IMR-90 (cell line): ENCODE measurements at regions of chr18 and their contacts with region 1.

Region 1: DNA sequence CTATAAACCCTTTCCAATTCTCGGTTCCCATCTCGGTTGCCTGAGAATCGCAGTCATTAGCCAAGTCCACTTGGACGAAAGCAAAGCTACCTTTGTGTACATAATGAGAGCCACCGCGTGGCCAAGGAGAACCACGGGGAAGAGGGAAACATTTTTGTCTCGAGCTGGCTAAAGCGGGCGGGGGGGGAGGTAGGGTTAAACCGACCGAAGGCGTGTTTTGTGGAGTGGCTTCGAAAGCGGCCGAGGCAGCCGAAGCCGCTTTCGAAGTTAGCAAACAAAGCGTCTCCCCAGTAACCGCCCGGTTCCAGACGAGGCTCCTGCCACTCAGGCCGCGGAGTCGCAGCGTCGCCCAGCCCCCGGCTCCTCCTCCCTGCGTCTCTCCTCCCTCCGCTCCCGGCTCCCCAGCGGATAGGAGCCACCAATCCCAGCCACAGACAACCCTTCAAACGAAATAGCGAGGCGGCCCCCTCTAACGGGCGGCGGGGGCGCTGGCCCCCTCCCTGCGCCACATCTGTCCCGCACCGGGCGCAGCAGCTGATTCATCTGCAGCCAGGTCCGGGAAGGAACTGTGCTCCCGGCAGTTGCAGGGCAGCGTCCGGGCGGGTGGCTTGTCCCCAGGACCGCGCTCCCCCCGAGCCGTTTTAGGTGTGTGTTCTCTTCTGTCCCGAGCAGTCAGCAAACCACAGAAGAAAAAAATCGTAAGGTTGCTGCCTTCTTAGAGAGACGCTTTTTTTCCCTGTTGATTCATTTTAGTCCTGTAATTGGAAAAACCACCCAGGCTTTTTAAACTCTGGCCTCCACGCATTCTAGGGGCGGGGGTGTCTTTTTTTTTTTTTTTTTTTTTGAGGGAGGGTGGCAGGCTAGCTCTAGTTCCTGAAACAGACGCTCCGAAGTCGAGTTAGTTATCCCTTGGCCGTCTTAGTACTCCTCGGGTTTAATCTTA is 1.8 kb upstream of the TGIF1 start:
- DNase-seq: peak; percentile 96
- ATAC-seq: peak; percentile 76
- H3K4me3 ChIP-seq: peak overlapping the region; percentile 85
- H3K27ac ChIP-seq: peak overlapping the region; percentile 91
- H3K4me1 ChIP-seq: peaks cover 2% of the 10 kb centered on the region
- H3K27me3 ChIP-seq: no peaks in the 10 kb centered on the region
- CTCF ChIP-seq: peak; percentile 24; the same call in 1 of the 2 replicates
- POLR2A ChIP-seq: peak; percentile 95
- RAD21 ChIP-seq: peak; percentile 35; the same call in 1 of the 2 replicates

Region 2: DNA sequence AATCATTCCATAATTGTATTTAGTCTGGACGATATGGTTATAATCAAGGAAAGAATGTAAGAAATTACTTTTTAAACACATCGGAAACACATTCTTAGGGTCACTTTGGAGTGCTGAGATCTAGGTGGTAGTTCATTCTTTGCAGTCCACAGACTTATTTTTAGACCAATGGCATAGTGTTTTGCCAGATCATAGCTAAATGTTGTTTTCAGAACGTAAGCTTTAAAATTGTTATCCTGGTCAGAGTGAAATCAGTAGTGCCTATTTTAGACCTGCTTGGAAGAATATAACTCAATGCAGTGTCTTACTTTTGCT is 196.2 kb before region 1 on chr18:
- CTCF ChIA-PET with region 1: no interaction called
- POLR2A ChIA-PET with region 1: interaction called, 12 read pairs
- dilution Hi-C with region 1: no loop called
- in situ Hi-C with region 1: no loop called
- intact Hi-C with region 1: no loop called
- DNase-seq: peak; percentile 37
- ATAC-seq: no peak
- H3K4me3 ChIP-seq: peak overlapping the region; percentile 14; the same call in 1 of the 2 replicates
- H3K27ac ChIP-seq: peak overlapping the region; percentile 17; the same call in 1 of the 2 replicates
- H3K4me1 ChIP-seq: peaks cover 16% of the 10 kb centered on the region
- H3K27me3 ChIP-seq: no peaks in the 10 kb centered on the region
- CTCF ChIP-seq: no peak
- POLR2A ChIP-seq: no peak
- RAD21 ChIP-seq: no peak

Region 3: DNA sequence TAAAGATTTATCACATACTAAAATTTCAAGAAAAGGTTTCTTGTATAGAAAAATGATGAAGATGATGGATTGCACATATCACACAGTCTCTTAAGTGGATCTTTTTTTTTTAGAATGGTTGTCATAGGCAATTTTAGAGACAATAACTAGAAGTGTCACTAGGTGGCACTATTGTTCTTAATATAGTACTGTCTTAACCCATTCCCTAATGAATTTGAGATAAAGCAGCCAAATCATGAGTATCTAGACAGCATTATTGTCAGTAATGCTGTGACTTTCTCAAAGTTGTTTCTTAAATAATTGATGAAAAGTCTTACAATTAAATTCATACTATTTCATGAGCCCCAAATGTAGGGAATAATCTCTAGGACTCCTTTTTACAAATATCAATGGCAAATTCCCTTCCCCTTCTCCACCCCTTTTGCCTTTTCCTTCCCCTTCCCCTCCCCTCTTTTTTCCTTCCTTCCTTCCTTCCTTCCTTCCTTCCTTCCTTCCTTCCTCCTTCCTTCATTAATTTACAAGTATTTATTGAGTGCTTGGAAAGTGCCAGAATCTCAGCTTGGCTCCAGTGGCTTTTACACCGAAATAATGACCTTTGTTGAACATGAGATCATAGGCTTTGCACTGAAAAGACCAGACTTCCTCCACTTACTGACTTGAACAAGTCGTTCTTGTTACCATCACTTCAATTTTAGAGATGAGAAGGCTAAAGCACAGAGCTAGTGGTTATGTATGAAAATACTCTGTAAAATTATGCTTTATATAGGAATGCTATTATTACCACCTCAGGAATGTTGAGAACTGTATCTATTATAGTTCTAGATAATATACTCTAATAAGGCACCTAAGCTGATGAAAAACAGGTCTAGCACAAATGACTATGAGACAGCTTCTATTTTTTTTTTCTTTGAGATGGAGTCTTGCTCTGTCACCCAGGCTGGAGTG is 166.4 kb before region 1 on chr18:
- CTCF ChIA-PET with region 1: no interaction called
- POLR2A ChIA-PET with region 1: no interaction called
- dilution Hi-C with region 1: no loop called
- in situ Hi-C with region 1: loop called (anchors 5 kb)
- intact Hi-C with region 1: loop called (anchors 1 kb)
- DNase-seq: peak; percentile 86
- ATAC-seq: peak; percentile 79
- H3K4me3 ChIP-seq: no peak overlapping the region
- H3K27ac ChIP-seq: no peak overlapping the region
- H3K4me1 ChIP-seq: no peaks in the 10 kb centered on the region; the same call in 1 of the 2 replicates
- H3K27me3 ChIP-seq: no peaks in the 10 kb centered on the region
- CTCF ChIP-seq: peak; percentile 75
- POLR2A ChIP-seq: no peak
- RAD21 ChIP-seq: peak; percentile 89

Region 4: DNA sequence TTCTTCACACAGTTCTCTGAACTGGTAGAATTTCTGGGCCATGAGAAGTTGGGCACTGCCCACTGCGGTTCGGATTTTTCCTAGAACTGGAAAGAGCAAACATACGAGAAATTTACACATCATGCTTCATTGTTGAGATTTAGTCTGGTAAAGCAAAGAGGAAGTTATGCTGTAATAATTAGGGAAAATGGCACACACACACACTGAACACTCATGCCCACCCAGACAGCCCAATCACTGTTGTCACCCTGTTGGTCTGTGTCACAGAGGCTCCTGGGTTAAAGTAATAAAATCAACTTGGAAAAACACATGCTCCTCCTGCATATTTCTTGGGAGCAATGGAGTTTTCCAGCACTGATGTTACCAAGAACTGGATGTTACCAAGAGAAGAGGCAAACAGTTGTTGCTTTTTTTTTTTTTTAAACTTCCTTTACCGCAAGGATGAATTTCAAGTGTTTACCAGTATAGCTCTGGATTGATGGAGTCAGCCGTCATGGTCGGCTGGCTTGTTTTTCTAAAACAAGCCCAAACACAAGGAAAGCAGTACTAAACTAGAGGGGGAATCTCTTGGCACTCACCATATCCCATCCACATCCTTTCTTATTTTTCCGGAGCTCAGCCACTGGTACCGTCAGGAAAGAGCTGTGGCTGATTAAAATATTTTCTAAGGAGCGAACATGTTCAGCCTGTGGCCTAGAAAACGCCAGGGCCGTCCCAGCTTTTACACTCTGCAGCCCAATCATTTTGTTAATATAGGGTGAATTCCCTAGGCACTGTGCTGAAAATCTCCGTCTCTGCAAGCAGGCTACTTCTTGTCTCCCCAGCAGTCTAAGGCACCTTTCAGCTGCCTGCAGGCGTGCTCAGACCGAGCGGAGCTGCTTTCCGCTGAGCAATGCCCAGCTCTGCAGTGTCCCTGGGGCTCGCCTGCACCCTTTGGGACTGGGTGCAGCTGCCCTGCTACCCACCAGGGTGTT is 60.7 kb after region 1 on chr18:
- CTCF ChIA-PET with region 1: no interaction called
- POLR2A ChIA-PET with region 1: no interaction called
- dilution Hi-C with region 1: no loop called
- in situ Hi-C with region 1: no loop called
- intact Hi-C with region 1: no loop called
- DNase-seq: no peak
- ATAC-seq: peak; percentile 37; the same call in 1 of the 2 replicates
- H3K4me3 ChIP-seq: no peak overlapping the region
- H3K27ac ChIP-seq: no peak overlapping the region
- H3K4me1 ChIP-seq: peaks cover 2% of the 10 kb centered on the region; the same call in 1 of the 2 replicates
- H3K27me3 ChIP-seq: no peaks in the 10 kb centered on the region
- CTCF ChIP-seq: no peak
- POLR2A ChIP-seq: no peak
- RAD21 ChIP-seq: no peak

Region 5: DNA sequence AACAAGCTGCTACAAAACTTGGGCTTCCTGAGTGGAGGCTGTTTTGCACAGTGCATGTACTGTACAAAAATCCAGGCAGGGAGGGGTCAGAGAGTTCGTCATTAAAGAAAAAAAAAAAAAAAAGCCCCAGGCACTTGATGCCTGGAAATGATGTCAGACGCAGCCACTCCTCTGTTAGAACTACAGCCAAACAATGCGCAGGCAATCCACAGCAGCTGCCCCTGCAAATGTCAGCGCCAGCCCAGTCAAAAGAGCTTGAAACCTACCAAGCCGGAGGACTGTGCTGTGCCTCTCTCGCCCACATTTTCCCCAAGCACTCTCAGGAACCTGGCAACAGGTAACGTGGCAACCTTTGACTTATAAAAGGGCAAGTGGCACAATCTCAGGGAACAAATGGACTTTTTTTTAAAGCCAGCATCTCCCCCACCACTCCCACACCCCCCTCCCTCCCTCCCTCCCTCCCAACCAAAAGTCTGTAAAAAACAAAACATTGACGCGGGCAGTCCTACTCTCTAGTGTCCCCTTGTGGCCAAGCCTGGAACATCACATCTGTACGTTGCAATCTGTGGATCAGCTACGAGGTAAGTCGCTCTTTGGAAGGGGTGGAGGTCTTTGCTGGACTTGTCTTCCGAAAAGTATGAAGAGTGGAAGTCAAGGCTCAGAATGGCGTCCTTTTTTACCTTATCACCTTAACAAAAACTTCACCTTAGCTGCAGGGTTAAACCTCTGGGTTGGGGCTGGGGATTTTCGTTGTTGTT is 145.9 kb after region 1 on chr18:
- CTCF ChIA-PET with region 1: interaction called, 33 read pairs
- POLR2A ChIA-PET with region 1: interaction called, 22 read pairs
- dilution Hi-C with region 1: no loop called
- in situ Hi-C with region 1: loop called (anchors 5 kb)
- intact Hi-C with region 1: loop called (anchors 1 kb)
- DNase-seq: peak; percentile 98
- ATAC-seq: peak; percentile 79
- H3K4me3 ChIP-seq: peak overlapping the region; percentile 57
- H3K27ac ChIP-seq: peak overlapping the region; percentile 96
- H3K4me1 ChIP-seq: peaks cover 29% of the 10 kb centered on the region
- H3K27me3 ChIP-seq: no peaks in the 10 kb centered on the region
- CTCF ChIP-seq: peak; percentile 83
- POLR2A ChIP-seq: peak; percentile 90
- RAD21 ChIP-seq: peak; percentile 65

Region 6: DNA sequence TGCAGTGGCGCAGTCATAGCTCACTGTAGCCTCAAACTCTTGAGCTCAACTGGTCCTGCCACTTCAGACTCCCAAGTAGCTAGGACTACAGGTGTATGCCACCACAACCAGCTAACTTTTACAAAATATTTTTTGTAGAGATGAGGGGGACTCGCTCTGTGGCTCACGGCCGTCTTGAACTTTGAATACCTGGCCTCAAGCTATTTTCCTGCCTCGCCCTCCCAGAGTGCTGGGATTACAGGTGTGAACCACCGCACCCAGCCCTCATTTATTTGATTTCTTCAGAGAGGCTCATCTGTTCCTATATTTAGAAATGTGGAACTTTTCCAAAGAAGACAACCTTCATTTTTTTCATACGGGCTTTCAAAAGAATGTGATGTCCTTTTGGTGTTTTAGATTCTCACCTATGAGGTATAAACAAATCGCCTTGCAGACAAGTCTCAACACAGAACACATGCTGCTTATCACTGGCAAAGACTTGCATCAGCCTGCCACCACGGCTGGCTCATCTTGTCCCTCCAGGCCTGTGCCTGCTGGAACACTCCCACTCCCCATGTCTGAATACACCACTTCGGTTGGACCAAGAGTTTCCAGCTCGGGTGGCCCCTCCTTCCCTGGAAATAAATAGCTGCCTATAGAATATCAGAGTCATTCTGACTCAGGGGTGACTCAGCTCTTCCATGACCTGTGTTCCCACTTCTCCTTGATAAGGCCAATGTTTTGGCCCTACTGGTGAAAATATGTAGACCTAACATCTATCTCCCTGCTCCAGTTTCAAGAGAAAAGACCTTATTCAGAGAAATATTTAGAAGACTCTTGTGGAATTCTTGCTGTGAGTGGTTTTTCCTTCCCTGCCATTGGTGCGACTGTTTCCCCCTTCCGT is 204.5 kb after region 1 on chr18:
- CTCF ChIA-PET with region 1: no interaction called
- POLR2A ChIA-PET with region 1: no interaction called
- dilution Hi-C with region 1: no loop called
- in situ Hi-C with region 1: no loop called
- intact Hi-C with region 1: loop called (anchors 5 kb)
- DNase-seq: peak; percentile 99
- ATAC-seq: peak; percentile 82
- H3K4me3 ChIP-seq: no peak overlapping the region
- H3K27ac ChIP-seq: peak overlapping the region; percentile 94
- H3K4me1 ChIP-seq: peaks cover 27% of the 10 kb centered on the region
- H3K27me3 ChIP-seq: no peaks in the 10 kb centered on the region
- CTCF ChIP-seq: peak; percentile 21; the same call in 1 of the 2 replicates
- POLR2A ChIP-seq: peak; percentile 94
- RAD21 ChIP-seq: peak; percentile 29; the same call in 1 of the 2 replicates

Region 7: DNA sequence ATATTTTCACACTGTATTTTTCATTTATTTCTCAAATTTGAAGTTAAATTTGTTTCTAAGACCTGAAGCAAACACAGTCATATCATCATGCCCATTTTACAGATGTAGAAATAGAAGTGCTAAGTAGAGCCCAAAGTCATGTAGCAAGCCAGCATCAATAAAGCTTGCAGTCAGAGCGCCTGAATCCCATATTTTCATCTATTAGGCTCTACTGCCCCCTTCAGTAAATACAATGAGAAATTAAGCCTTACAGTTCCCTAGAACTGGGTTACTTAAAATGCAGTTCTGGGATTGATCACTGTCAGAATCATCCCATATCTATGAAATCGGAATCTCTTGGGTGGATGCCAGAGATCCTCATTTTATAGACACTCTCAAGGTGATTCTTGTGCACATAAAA is 421.7 kb after region 1 on chr18:
- CTCF ChIA-PET with region 1: no interaction called
- POLR2A ChIA-PET with region 1: interaction called, 8 read pairs
- dilution Hi-C with region 1: no loop called
- in situ Hi-C with region 1: no loop called
- intact Hi-C with region 1: loop called (anchors 5 kb)
- DNase-seq: peak; percentile 76
- ATAC-seq: peak; percentile 87
- H3K4me3 ChIP-seq: no peak overlapping the region
- H3K27ac ChIP-seq: no peak overlapping the region
- H3K4me1 ChIP-seq: no peaks in the 10 kb centered on the region
- H3K27me3 ChIP-seq: peaks cover 3% of the 10 kb centered on the region; the same call in 1 of the 2 replicates
- CTCF ChIP-seq: peak; percentile 71
- POLR2A ChIP-seq: no peak
- RAD21 ChIP-seq: peak; percentile 83